ENCODE measurements at regions of chr9 and their contacts with region 1.

Region 1: GRCh38 chr9:124839612-124840299 is 13.5 kb upstream of the WDR38 start:
- DNase-seq: peak; percentile 53 to 55
- ATAC-seq: peak; percentile 63 to 82; a peak in 4 of 6 replicates
- H3K4me3 ChIP-seq: no peak overlapping the region
- H3K27ac ChIP-seq: peak overlapping the region in 1 of 2 experiments; percentile 59; a peak in 2 of 6 replicates
- H3K4me1 ChIP-seq: peaks cover 13% of the 10 kb centered on the region
- CTCF ChIP-seq: peak; percentile 11; the same call in 1 of the 3 replicates
- EP300 ChIP-seq: no peak
- POLR2A ChIP-seq: no peak
- RAD21 ChIP-seq: peak in 1 of 2 experiments; percentile 12; a peak in 1 of 5 replicates

Region 2: GRCh38 chr9:124812401-124813016 is 27.2 kb before region 1 on chr9:
- CTCF ChIA-PET with region 1: interaction called, 53 read pairs
- POLR2A ChIA-PET with region 1: no interaction called
- DNase-seq: peak; percentile 86 to 95
- ATAC-seq: peak; percentile 78 to 80
- H3K4me3 ChIP-seq: no peak overlapping the region
- H3K27ac ChIP-seq: peak overlapping the region; percentile 90 to 93
- H3K4me1 ChIP-seq: peaks cover 41% of the 10 kb centered on the region
- CTCF ChIP-seq: no peak
- EP300 ChIP-seq: peak in 1 of 2 experiments; percentile 17; a peak in 1 of 5 replicates
- POLR2A ChIP-seq: no peak
- RAD21 ChIP-seq: 0 out of 5 replicates have a peak, but pooled peaks of 1 of the 2 experiments have one; percentile 1

Region 3: DNA sequence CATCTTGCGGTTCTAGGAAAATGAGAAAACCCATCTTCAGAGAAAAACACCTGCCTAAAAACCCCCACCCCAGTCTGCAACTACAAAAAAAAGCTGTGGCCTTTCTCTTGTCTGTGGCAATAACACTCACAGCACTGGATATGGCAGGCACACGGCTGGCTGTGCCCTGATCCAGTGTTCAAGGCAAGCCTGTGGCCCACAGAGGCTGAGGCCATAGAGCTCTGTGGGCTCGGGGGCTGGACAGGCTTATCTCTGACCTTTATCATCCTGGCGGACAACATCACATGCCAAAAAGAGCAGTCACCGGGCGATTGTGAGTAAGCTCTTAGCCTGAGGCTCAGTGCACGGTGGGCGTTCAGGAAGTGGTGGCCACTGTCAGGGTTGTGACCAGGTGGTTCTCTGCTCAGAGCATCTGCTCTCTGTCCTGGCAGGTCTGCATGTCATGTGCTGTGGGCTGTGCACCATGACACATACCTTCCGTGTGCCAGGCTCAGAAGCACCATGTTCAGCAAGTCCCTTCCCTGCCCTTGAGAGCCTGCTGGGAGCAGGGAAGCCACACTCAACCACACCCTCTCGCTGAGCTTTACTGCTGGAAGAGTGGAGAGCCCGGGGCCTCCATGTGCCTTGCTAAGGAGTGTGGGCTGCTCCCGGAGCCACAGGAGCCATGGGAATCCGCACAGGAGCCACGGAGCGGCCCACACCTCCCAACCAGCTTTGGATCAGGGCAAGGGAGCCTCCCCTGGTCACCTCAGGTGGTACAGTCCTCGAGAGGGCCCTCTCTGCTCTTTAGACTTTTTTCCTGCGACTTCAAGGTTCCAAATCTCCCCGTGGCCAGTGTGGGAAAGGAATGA is 21.1 kb before region 1 on chr9:
- CTCF ChIA-PET with region 1: interaction called, 53 read pairs
- POLR2A ChIA-PET with region 1: no interaction called
- DNase-seq: peak in 1 of 2 experiments; percentile 67
- ATAC-seq: peak; percentile 80 to 81
- H3K4me3 ChIP-seq: no peak overlapping the region
- H3K27ac ChIP-seq: peak overlapping the region; percentile 53 to 86
- H3K4me1 ChIP-seq: peaks cover 20% of the 10 kb centered on the region
- CTCF ChIP-seq: peak; percentile 13; the same call in 1 of the 3 replicates
- EP300 ChIP-seq: no peak
- POLR2A ChIP-seq: no peak
- RAD21 ChIP-seq: 0 out of 5 replicates have a peak, but pooled peaks have one; percentile 17

Region 4: DNA sequence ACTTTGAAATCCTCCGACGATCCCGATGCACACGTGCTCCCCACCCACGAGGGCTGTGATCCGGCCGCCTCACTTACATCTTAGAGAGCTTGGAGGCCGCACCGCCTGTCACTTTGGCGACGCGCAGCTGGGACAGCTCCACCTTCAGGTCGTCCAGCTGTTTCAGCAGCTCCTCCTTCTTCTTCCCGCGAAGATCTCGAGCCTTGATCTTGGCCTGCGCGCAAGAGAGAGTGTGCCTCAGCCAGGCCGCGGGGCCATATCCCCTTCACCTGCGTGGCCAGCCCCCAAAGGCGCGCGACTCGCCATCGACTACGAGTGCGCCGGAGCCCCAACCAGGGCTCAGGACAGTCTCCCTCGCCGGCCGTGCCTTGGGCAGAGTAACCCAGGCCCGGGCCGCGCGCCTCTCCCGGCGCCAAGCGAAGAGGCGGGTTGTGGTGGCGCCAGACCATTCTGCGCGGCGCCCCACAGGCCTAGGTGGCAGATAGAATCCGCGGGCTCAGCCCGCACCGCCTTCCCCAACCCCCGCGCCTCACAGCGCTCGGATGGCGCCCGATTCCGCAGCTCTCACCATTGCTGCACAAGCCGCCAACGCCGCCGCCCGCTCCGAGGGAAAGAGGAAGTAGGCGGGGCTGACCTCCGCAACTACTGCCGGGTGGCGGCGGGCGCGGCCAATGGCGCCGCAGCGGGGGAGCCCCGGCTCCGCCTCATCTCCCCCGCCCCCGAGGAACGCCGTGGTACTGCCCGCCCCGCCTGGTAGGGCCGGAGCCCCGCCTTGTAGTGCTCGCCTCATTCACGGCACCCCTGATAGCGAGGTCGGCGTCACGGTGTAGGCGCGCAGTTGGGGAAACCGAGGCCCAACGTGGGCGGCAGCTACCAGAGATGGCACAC is 21.8 kb after region 1 on chr9 and contains the starts of genes ARPC5L and RPL35:
- CTCF ChIA-PET with region 1: interaction called, 451 read pairs
- POLR2A ChIA-PET with region 1: interaction called, 3 read pairs
- DNase-seq: peak; percentile 94 to 95
- ATAC-seq: peak; percentile 92 to 94
- H3K4me3 ChIP-seq: peak within 1 kb of the TSS; percentile 85
- H3K27ac ChIP-seq: peak within 1 kb of the TSS; percentile 89 to 93
- H3K4me1 ChIP-seq: peaks cover 48% of the 10 kb centered on the region
- CTCF ChIP-seq: no peak
- EP300 ChIP-seq: no peak
- POLR2A ChIP-seq: peak; percentile 86
- RAD21 ChIP-seq: no peak
- polyA plus RNA-seq, gene ARPC5L: 44.9 and 62.8 TPM in 2 replicates
- polyA plus RNA-seq, gene RPL35: 3,076 and 3,452 TPM in 2 replicates

Measured in A549 (cell line).